ENCODE measurements at regions of chr4 and their contacts with region 1.

Region 1: DNA sequence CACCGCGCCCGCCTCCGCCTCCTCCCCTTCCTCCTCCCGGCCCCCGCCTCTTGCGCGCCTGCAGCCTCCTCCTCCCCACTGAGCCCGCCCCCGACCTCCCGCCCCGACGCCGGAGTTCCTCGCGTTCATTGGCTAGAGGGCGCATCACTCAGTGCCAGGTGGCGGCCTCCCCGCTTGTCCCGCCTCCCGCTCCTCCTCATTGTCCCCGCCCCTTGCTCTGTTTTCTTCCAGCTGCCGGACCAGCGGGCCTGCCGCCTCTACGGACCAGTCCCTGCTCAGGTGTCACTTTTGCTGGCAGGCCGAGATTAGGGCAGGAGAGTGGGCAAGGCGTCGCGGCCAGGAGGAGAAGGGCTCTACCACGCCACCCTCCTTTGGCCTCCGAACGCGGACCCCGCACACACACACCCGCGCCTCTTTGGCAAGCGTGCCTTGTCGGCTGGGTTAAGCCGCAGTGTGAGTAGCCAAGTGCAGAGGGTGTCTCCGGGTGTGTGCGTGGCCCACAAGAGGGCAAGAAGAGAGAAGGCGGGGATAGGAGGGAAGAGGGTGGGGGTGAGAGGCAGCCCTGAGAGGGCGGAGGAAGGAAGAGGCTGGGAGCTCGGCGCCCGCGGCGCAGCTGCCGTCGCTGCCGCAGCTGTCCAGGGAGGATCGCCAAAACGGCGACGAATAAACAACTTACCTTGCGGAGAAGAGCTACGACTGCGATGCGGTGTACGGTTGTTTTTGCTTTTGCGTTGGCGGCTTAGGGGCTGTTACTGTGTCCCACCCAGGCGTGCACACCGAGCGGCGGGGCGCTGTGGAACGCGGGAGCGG is 436 bp upstream of the PPP3CA start:
- DNase-seq: peak; percentile 98 to 100 (median 99)
- ATAC-seq: peak; percentile 85
- H3K4me3 ChIP-seq: peak overlapping the region; percentile 96 to 99
- H3K4me3 Mint-ChIP-seq: peak overlapping the region; percentile 98
- H3K27ac ChIP-seq: peak overlapping the region; percentile 71 to 82
- H3K27ac Mint-ChIP-seq: peak overlapping the region; percentile 94
- H3K4me1 ChIP-seq: peaks cover 10% of the 10 kb centered on the region
- H3K4me1 Mint-ChIP-seq: peaks cover 33% of the 10 kb centered on the region
- H3K27me3 ChIP-seq: peaks cover 0 to 3% of the 10 kb centered on the region in 2 experiments
- H3K27me3 Mint-ChIP-seq: peaks cover 15% of the 10 kb centered on the region
- CTCF ChIP-seq: no peak

Region 2: DNA sequence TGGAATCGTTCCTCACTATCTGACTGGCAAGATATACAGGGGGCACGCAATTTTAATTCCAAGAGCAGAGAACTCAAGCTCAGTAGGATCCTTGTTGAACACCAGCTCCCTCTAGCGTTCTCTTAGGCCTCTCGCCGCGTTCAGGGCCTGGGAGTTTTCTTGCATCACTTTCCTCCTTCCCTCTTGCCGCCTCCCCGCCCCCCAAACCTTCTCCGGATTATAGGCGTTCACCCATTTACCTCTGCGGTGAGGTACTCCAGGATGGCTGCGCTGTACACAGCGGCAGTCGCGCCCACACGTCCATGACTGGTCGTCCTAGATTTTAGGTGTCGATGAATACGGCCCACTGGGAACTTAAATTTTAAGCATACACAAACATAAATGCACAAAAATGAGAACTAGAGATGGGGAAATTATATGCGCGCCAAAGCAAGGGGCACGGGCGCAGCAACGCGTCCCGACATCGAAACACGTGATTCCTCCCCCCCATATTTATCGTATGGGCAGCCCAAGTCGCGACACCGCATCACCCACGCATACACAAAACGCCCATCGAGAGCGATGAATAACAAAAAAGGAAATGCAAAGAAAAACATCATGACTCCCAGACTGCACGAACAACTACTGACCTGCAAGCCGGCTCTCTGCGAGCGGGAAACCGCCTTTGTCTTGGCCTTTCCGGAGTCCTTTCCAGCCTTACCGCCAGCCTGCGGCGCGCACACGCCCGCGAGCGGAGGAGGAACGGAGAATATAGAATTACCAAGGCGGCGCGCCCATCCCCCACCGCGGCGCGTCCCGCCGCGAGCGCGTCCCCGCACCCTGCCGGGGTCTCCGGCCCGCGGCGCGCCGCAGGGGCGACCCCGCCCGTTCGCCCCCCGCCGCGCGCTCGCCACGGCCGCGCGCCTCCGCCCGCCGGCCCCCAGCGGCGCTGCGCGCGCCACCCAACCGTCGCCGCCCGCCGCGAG is 1398.4 kb before region 1 on chr4:
- CTCF ChIA-PET with region 1: no interaction called
- POLR2A ChIA-PET with region 1: no interaction called
- intact Hi-C with region 1: loop called (anchors 1 to 5 kb)
- DNase-seq: peak; percentile 67 to 95 (median 88)
- ATAC-seq: peak; percentile 32
- H3K4me3 ChIP-seq: peak overlapping the region; percentile 89 to 97
- H3K4me3 Mint-ChIP-seq: no peak overlapping the region
- H3K27ac ChIP-seq: peak overlapping the region; percentile 85 to 97
- H3K27ac Mint-ChIP-seq: no peak overlapping the region
- H3K4me1 ChIP-seq: peaks cover 37% of the 10 kb centered on the region
- H3K4me1 Mint-ChIP-seq: peaks cover 35% of the 10 kb centered on the region
- H3K27me3 ChIP-seq: no peaks in the 10 kb centered on the region
- H3K27me3 Mint-ChIP-seq: no peaks in the 10 kb centered on the region
- CTCF ChIP-seq: peak; percentile 58

Region 3: DNA sequence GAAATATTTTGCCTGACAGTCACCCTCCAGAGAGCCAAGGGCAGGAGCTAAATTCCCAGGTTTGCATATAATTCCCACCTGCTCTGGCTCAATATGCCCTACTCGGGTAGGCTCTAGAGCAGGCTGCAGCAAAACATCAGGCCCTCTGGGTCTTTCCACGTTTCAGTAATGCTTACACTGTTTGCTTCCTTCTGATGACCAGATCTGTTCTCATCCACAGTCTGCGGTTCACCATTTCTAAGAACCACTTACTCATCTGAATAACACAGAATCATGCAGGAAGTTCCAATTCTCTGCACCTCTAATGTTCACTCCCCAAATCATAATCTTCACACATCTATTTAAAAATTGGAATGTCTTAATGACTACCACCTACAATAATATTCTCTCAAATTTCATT is 141.8 kb before region 1 on chr4:
- CTCF ChIA-PET with region 1: no interaction called
- POLR2A ChIA-PET with region 1: no interaction called
- intact Hi-C with region 1: loop called in 1 of 2 experiments (anchors 5 kb)
- DNase-seq: peak in 8 of 9 experiments; percentile 1 to 73 (median 34)
- ATAC-seq: peak; percentile 94
- H3K4me3 ChIP-seq: no peak overlapping the region
- H3K4me3 Mint-ChIP-seq: peak overlapping the region; percentile 38
- H3K27ac ChIP-seq: no peak overlapping the region
- H3K27ac Mint-ChIP-seq: peak overlapping the region; percentile 2
- H3K4me1 ChIP-seq: peaks cover 16% of the 10 kb centered on the region
- H3K4me1 Mint-ChIP-seq: peaks cover 47% of the 10 kb centered on the region
- H3K27me3 ChIP-seq: no peaks in the 10 kb centered on the region
- H3K27me3 Mint-ChIP-seq: no peaks in the 10 kb centered on the region
- CTCF ChIP-seq: no peak

Region 4: GRCh38 chr4:101419324-101420135 is 71.8 kb after region 1 on chr4:
- CTCF ChIA-PET with region 1: no interaction called
- POLR2A ChIA-PET with region 1: interaction called, 11 read pairs
- intact Hi-C with region 1: loop called (anchors 2 to 5 kb)
- DNase-seq: peak in 1 of 9 experiments; percentile 40
- ATAC-seq: no peak
- H3K4me3 ChIP-seq: no peak overlapping the region
- H3K4me3 Mint-ChIP-seq: no peak overlapping the region
- H3K27ac ChIP-seq: no peak overlapping the region
- H3K27ac Mint-ChIP-seq: no peak overlapping the region
- H3K4me1 ChIP-seq: peaks cover 43% of the 10 kb centered on the region
- H3K4me1 Mint-ChIP-seq: peaks cover 39% of the 10 kb centered on the region
- H3K27me3 ChIP-seq: peaks cover 0 to 4% of the 10 kb centered on the region in 2 experiments
- H3K27me3 Mint-ChIP-seq: peaks cover 42% of the 10 kb centered on the region
- CTCF ChIP-seq: no peak

Region 5: GRCh38 chr4:102518703-102519131 is 1171.0 kb after region 1 on chr4:
- CTCF ChIA-PET with region 1: no interaction called
- POLR2A ChIA-PET with region 1: no interaction called
- intact Hi-C with region 1: loop called in 1 of 2 experiments (anchors 10 kb)
- DNase-seq: peak in 4 of 9 experiments; percentile 18 to 77 (median 46)
- ATAC-seq: peak; percentile 77
- H3K4me3 ChIP-seq: peak overlapping the region in 1 of 2 experiments; percentile 10
- H3K4me3 Mint-ChIP-seq: peak overlapping the region; percentile 46
- H3K27ac ChIP-seq: peak overlapping the region; percentile 28 to 51
- H3K27ac Mint-ChIP-seq: peak overlapping the region; percentile 89
- H3K4me1 ChIP-seq: peaks cover 55% of the 10 kb centered on the region
- H3K4me1 Mint-ChIP-seq: peaks cover 75% of the 10 kb centered on the region
- H3K27me3 ChIP-seq: no peaks in the 10 kb centered on the region
- H3K27me3 Mint-ChIP-seq: no peaks in the 10 kb centered on the region
- CTCF ChIP-seq: no peak

Region 6: GRCh38 chr4:103099691-103100392 is 1752.1 kb after region 1 on chr4 and contains the start of gene BDH2:
- CTCF ChIA-PET with region 1: no interaction called
- POLR2A ChIA-PET with region 1: no interaction called
- intact Hi-C with region 1: loop called in 1 of 2 experiments (anchors 5 kb)
- DNase-seq: peak in 8 of 9 experiments; percentile 3 to 91 (median 48)
- ATAC-seq: peak; percentile 99
- H3K4me3 ChIP-seq: peak within 1 kb of the TSS; percentile 51 to 60
- H3K4me3 Mint-ChIP-seq: peak within 1 kb of the TSS; percentile 85
- H3K27ac ChIP-seq: peak within 1 kb of the TSS; percentile 4 to 37
- H3K27ac Mint-ChIP-seq: peak within 1 kb of the TSS; percentile 92
- H3K4me1 ChIP-seq: peaks cover 15% of the 10 kb centered on the region
- H3K4me1 Mint-ChIP-seq: peaks cover 41% of the 10 kb centered on the region
- H3K27me3 ChIP-seq: no peaks in the 10 kb centered on the region
- H3K27me3 Mint-ChIP-seq: no peaks in the 10 kb centered on the region
- CTCF ChIP-seq: peak; percentile 78
- total RNA-seq, gene BDH2: 16.4 to 19.9 TPM